ENCODE measurements at regions of chr12 and their contacts with region 1.

Region 1: GRCh38 chr12:111451649-111452129 is 46.0 kb downstream of the SH2B3 start:
- DNase-seq: peak; percentile 59
- ATAC-seq: peak; percentile 60
- H3K4me3 ChIP-seq: no peak overlapping the region
- H3K27ac ChIP-seq: no peak overlapping the region
- H3K4me1 ChIP-seq: peaks cover 7% of the 10 kb centered on the region
- H3K27me3 ChIP-seq: no peaks in the 10 kb centered on the region
- CTCF ChIP-seq: peak; percentile 77
- POLR2A ChIP-seq: no peak
- RAD21 ChIP-seq: peak; percentile 70

Region 2: DNA sequence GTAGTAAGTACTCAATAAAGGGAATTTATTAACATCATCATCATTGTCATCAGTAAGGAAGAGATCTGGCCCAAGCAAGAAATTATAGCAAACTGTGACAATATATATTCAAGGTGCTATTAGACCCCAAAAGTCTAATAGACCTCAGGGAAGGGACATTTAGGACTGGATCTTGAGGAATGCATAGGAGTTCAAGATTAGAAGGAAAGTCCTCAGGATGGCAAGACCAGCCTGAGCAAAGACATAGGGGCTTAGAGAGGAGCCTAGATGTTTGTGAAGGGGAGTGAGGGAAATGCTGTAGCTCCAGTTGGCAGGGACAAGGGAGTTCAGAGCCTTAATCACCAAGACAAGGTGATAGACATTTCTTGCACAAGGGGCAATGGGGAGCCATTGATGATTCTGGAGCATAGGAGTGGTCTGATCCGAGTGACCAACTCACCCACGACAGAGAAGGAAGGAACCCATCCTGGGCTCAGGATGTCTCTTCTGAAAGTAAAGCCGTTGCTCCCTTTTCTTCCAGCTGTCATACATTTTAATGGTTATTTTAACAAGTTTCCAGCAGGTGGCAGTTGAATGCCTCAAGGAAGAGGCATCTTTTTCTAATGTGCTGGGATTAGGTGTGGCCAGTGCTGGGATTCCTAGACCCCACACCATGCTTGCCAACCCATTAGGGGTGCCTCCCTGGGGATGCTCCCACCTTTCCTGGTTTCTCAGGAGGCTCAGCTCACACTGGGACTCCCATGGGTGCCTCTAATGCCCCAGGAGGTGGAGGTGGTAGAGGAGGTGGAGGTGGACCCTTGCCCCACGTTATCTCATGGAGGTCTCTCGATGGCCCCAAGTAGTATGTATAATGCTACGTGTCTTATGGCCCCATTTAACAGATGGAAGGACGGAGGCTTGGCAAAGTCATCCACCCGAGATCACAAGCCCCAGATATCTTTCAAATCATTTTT is 120.6 kb before region 1 on chr12:
- CTCF ChIA-PET with region 1: interaction called, 3 read pairs
- POLR2A ChIA-PET with region 1: no interaction called
- dilution Hi-C with region 1: no loop called
- in situ Hi-C with region 1: no loop called
- intact Hi-C with region 1: loop called (anchors 5 kb)
- DNase-seq: peak; percentile 24
- ATAC-seq: peak; percentile 78
- H3K4me3 ChIP-seq: no peak overlapping the region
- H3K27ac ChIP-seq: no peak overlapping the region
- H3K4me1 ChIP-seq: no peaks in the 10 kb centered on the region
- H3K27me3 ChIP-seq: peaks cover 13% of the 10 kb centered on the region
- CTCF ChIP-seq: peak; percentile 37
- POLR2A ChIP-seq: no peak
- RAD21 ChIP-seq: peak; percentile 38

Region 3: DNA sequence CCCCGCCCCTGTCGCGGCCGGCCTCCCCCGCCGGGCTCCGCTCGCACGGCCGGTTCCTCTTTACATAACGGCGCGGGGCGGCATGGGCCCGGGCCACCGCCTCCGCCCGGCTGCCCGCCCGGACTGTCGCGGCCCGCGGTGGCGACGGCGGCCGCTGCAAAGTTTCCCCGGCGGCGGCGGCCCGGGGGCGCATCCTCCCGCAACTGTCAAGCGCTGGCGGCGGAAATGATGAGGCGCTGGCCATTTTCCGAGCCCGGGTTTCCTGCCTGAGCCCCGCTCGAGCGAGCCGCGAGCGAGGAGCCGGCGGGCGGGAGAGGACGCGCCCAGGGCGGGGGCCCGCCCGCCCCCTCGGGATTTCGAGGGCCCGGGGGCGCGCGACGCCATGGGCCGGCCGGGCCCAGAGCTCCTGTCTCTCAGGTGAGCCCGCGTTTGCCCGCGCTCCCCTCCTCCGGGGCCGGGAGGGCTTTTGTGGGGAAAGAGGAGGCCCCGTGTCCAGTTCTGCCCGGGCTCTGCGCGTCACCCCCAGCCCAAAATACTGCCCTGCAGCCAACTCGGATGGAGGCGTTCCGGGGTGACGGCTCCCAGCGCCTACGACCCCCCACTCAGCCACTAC is 45.7 kb before region 1 on chr12 and contains the start of gene SH2B3:
- CTCF ChIA-PET with region 1: interaction called, 5 read pairs
- POLR2A ChIA-PET with region 1: no interaction called
- dilution Hi-C with region 1: no loop called
- in situ Hi-C with region 1: no loop called
- intact Hi-C with region 1: loop called (anchors 2 kb)
- DNase-seq: peak; percentile 48
- ATAC-seq: peak; percentile 31
- H3K4me3 ChIP-seq: peak within 1 kb of the TSS; percentile 55
- H3K27ac ChIP-seq: peak within 1 kb of the TSS; percentile 87
- H3K4me1 ChIP-seq: peaks cover 29% of the 10 kb centered on the region
- H3K27me3 ChIP-seq: no peaks in the 10 kb centered on the region
- CTCF ChIP-seq: no peak
- POLR2A ChIP-seq: peak; percentile 51; the same call in 1 of the 2 replicates
- RAD21 ChIP-seq: no peak
- total RNA-seq, gene SH2B3: 9.2 and 9.3 TPM in 2 replicates

Region 4: GRCh38 chr12:111893287-111893686 is 441.6 kb after region 1 on chr12:
- CTCF ChIA-PET with region 1: no interaction called
- POLR2A ChIA-PET with region 1: no interaction called
- dilution Hi-C with region 1: no loop called
- in situ Hi-C with region 1: no loop called
- intact Hi-C with region 1: no loop called
- DNase-seq: peak; percentile 49
- ATAC-seq: peak; percentile 85
- H3K4me3 ChIP-seq: no peak overlapping the region
- H3K27ac ChIP-seq: no peak overlapping the region
- H3K4me1 ChIP-seq: no peaks in the 10 kb centered on the region
- H3K27me3 ChIP-seq: no peaks in the 10 kb centered on the region
- CTCF ChIP-seq: no peak
- POLR2A ChIP-seq: no peak
- RAD21 ChIP-seq: no peak

Measured in IMR-90 (cell line).